ENCODE measurements at regions of chr3 and their contacts with region 1.

Region 1: DNA sequence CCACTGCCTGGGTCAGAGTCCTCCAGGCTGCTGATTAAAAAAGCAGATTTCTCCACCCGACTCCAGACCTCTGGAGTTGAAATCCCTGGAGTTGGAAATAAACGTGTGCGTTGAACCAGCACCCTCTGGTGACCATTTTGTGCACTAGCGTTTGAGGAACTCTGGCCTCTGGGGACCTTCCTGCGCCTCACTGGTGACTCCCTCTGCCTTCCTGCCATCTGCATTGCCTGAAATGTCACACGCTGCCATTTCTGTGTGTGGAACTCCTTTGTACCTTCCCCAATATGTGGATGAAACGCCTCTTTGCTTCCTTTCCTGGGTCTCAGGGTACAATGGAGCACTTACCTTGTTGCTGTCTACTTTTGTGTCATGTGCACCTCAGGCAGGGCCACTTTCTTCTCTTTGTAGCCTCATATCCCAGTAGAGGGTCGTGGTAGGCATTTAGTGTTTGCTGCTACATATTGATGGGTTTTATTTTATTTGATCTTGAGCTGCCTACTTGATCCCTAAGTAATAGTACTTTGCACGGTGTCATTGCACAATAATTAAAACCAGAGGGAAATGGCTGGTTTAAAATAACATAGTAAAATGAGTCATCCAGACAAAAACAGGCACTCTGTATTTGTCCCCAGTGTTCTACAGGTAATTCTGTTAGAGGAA is 56.8 kb downstream of the GPR171 start:
- DNase-seq: peak; percentile 86

Region 2: GRCh38 chr3:150787741-150788370 is 358.3 kb before region 1 on chr3:
- intact Hi-C with region 1: loop called (anchors 5 to 10 kb)
- DNase-seq: peak; percentile 96